Gastrocnemius medialis (tissue), 4 donors: ENCODE measurements at regions of chr2 and their contacts with region 1.

Region 1: GRCh38 chr2:11656668-11657101 is 13.3 kb downstream of the NTSR2 start:
- DNase-seq: no peak
- ATAC-seq: no peak
- H3K4me3 ChIP-seq: no peak overlapping the region
- H3K27ac ChIP-seq: no peak overlapping the region
- H3K4me1 ChIP-seq: peaks cover 4 to 13% of the 10 kb centered on the region in 2 donors
- H3K27me3 ChIP-seq: no peaks in the 10 kb centered on the region
- CTCF ChIP-seq: no peak
- POLR2A ChIP-seq: no peak

Region 2: GRCh38 chr2:11270891-11271290 is 385.8 kb before region 1 on chr2:
- in situ Hi-C with region 1: no loop called
- intact Hi-C with region 1: no loop called
- DNase-seq: no peak
- ATAC-seq: no peak
- H3K4me3 ChIP-seq: no peak overlapping the region
- H3K27ac ChIP-seq: no peak overlapping the region
- H3K4me1 ChIP-seq: peaks cover 4 to 27% of the 10 kb centered on the region in 2 donors
- H3K27me3 ChIP-seq: no peaks in the 10 kb centered on the region
- CTCF ChIP-seq: no peak
- POLR2A ChIP-seq: no peak

Region 3: DNA sequence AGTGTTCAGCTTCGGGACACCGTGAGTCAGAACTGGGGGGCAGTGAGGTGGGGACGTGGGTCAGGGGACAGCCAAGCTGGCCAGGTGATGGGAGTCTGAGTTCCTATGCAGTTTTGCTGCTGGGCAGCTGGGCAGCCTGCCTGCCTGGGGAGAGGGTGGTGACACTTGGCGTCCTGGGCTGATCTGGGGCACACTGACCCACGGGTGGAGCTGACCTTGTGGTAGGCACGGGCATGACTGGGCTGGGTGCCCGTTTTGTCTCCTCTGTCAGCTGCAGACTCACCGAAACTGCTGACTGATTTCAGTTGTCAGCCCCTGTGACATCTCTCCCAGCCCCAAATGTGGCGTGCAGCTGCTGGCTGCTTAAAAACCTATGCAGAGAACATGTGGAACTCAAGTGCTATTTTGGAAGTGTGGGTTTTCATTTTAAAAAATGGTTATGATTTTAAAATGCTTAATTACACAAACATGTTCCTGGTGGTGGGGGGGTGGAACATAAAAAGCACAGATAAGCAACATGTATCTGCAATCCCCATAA is 158.1 kb before region 1 on chr2:
- in situ Hi-C with region 1: no loop called
- intact Hi-C with region 1: loop called (anchors 5 kb)
- DNase-seq: peak; percentile 95 to 98
- ATAC-seq: peak; percentile 95 to 97
- H3K4me3 ChIP-seq: no peak overlapping the region
- H3K27ac ChIP-seq: peak overlapping the region; percentile 66 to 84 (median 78)
- H3K4me1 ChIP-seq: peaks cover 13 to 21% of the 10 kb centered on the region in 2 donors
- H3K27me3 ChIP-seq: no peaks in the 10 kb centered on the region
- CTCF ChIP-seq: no peak
- POLR2A ChIP-seq: peak; percentile 26 to 41

Region 4: DNA sequence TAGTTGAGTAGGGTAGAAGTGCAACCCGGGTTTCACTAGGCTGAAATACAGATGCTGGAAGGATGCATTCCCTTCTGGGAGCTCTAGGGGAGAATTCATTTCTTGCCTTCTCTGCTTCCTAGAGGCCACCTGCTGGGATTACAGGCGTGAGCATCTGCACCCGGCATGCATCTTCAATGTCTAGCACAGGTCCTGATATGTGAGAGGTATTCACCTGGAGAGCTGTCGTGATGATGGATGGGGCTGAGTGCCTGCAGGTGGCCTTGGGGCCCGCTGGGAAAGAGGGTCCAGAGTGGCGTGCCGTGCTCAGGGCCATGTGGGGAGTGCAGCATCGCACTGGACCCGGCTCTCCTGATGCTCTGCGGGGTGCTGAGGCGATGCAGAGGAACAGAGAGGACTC is 20.0 kb after region 1 on chr2:
- in situ Hi-C with region 1: no loop called
- intact Hi-C with region 1: loop called (anchors 2 kb)
- DNase-seq: no peak
- ATAC-seq: no peak
- H3K4me3 ChIP-seq: no peak overlapping the region
- H3K27ac ChIP-seq: peak overlapping the region; percentile 92 to 100 (median 93)
- H3K4me1 ChIP-seq: peaks cover 43 to 57% of the 10 kb centered on the region in 2 donors
- H3K27me3 ChIP-seq: no peaks in the 10 kb centered on the region
- CTCF ChIP-seq: peak in 2 of 5 experiments; percentile 12 to 31
- POLR2A ChIP-seq: no peak

Region 5: GRCh38 chr2:13255485-13255884 is 1598.8 kb after region 1 on chr2:
- in situ Hi-C with region 1: no loop called
- intact Hi-C with region 1: no loop called
- DNase-seq: no peak
- ATAC-seq: no peak
- H3K4me3 ChIP-seq: no peak overlapping the region
- H3K27ac ChIP-seq: no peak overlapping the region
- H3K4me1 ChIP-seq: no peaks in the 10 kb centered on the region
- H3K27me3 ChIP-seq: no peaks in the 10 kb centered on the region
- CTCF ChIP-seq: no peak
- POLR2A ChIP-seq: no peak